Caco-2 (cell line): ENCODE measurements at regions of chr6 and their contacts with region 1.

Region 1: GRCh38 chr6:15948930-15949900 is 179.7 kb upstream of the MYLIP start:
- DNase-seq: peak; percentile 76 to 80
- H3K4me3 ChIP-seq: no peak overlapping the region
- H3K4me3 Mint-ChIP-seq: peak overlapping the region; percentile 39
- H3K27ac Mint-ChIP-seq: no peak overlapping the region
- H3K4me1 ChIP-seq: peaks cover 16% of the 10 kb centered on the region
- H3K4me1 Mint-ChIP-seq: peaks cover 12% of the 10 kb centered on the region
- H3K27me3 ChIP-seq: no peaks in the 10 kb centered on the region
- H3K27me3 Mint-ChIP-seq: no peaks in the 10 kb centered on the region
- CTCF ChIP-seq: no peak

Region 2: DNA sequence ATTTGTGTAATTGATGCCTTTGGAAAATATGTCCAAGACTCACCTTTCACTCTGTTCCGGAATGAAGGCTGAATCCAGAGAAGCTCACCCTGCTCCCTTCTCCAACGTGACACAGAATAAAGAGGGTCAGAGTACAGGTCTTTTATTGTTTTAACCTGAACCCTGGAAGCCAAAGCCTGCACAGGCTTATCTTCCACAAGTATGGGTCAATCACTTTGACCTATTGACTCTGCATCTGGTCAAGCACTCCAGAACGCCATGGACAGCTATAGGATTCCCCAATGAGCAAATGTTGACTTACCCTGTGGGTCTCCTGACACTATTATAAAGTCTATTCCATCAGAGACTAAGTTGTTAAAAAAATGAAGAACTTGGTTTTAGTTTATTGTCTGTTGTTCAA is 21.3 kb after region 1 on chr6:
- CTCF ChIA-PET with region 1: no interaction called
- POLR2A ChIA-PET with region 1: no interaction called
- intact Hi-C with region 1: loop called (anchors 1 kb)
- DNase-seq: peak; percentile 42 to 55
- H3K4me3 ChIP-seq: no peak overlapping the region
- H3K4me3 Mint-ChIP-seq: no peak overlapping the region
- H3K27ac Mint-ChIP-seq: no peak overlapping the region
- H3K4me1 ChIP-seq: peaks cover 6% of the 10 kb centered on the region; the same call in 1 of the 2 replicates
- H3K4me1 Mint-ChIP-seq: peaks cover 7% of the 10 kb centered on the region
- H3K27me3 ChIP-seq: no peaks in the 10 kb centered on the region
- H3K27me3 Mint-ChIP-seq: no peaks in the 10 kb centered on the region
- CTCF ChIP-seq: no peak